Common myeloid progenitor, CD34-positive (primary cell): ENCODE measurements at regions of chr7 and their contacts with region 1.

Region 1: DNA sequence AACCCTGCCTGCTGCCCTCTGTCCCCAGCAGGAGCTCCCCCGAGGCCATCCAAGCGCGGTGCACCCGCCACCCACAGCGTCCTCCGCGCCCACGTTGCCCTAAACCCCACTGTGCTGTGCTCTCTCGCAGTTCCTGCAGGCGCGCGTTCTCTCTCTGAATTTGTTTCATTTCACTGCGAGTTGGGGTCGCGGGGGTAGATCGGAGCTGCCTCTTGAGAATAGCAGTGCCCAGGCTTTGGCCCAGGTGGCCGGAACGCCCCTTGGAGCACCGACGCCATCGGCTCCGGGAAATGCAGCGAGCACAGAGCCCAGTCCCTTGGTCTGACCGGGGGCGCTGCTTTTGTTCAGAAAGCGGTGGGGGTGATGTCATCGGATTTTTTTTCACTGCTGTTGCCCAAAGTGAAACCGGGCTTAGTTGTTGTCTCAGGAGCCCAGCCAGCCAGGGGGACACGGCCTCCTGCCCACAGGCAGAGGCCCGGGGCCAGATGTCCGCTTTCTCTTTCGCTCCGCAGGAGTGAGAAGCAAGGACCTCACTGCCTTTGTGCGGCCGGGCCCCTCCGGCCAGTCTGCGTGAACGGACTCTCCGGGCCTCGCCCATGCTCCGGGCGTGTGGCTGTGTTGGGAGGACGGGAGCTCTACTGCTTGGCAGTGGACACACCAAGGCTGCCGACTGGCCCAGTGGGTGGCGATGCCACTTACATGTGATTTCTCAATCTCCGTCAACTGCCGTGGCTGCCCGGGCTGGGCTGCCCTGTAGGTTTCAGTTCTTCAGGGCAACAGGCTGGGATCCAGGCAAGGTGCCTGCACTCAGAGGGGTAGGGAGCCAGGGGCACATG is 43.1 kb downstream of the FOXK1 start:
- DNase-seq: peak; percentile 69 to 87 (median 84)
- H3K4me3 ChIP-seq: peak overlapping the region; percentile 37 to 86 (median 62)
- H3K27ac ChIP-seq: peak overlapping the region; percentile 46 to 85
- H3K4me1 ChIP-seq: peaks cover 0 to 30% (median 24%) of the 10 kb centered on the region in 4 experiments
- H3K27me3 ChIP-seq: no peaks in the 10 kb centered on the region

Region 2: DNA sequence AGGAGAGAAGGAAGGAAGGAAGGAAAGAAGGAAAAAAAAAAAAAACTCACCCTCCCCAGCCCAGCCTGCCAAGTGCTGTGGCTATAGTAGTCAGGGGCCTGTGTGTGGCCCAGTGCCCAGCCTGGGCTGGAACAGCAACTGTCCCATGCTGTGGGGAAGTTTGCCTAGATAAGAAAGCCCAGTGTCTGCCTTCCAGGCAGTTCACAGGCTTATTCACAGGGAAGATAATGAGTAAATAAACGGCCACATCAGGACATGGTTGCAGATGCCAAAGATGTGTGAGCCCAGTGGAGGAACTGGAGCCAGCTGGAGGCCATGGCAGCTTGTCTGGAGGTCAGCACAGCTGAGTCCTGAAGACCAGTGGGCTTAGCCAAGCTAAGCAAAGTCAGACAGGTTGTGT is 175.6 kb before region 1 on chr7:
- CTCF ChIA-PET with region 1: no interaction called
- POLR2A ChIA-PET with region 1: no interaction called
- DNase-seq: peak in 1 of 3 donors; percentile 1
- H3K4me3 ChIP-seq: no peak overlapping the region
- H3K27ac ChIP-seq: no peak overlapping the region
- H3K4me1 ChIP-seq: no peaks in the 10 kb centered on the region
- H3K27me3 ChIP-seq: no peaks in the 10 kb centered on the region

Region 3: DNA sequence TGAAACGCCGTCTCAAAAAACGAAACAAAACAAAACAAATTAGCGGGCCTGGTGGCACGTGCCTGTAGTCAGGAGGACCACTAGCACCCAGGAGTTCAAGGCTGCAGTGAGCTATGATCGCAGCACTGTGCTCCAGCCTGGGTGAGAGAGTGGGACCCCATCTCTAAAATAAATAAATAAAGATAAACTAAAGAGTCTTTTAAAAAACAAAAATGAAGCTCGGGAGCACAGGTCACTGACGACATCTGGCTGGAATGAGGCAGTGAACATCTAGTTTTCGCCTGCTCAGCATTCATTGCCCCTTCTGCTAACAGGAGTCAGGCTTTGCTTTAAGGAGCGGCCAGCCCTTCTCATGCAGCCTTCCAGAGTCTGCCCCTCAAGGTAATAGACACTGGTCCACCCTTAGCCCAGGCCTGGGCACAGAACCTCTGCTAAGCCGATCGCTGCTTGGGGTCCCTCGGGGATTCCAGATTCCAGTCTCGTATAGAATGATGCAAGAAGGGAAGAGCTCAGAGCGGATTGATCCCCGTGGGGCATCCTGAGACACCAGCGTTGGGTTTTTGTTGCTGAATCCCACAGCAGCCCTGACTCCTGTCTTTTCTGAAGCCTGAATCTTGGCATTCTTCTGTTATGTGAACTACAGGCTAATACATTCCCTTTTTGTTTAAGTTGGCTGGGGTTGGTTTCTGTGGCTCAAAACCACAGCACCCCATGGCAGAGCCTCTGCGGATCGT is 57.3 kb before region 1 on chr7:
- CTCF ChIA-PET with region 1: no interaction called
- POLR2A ChIA-PET with region 1: no interaction called
- DNase-seq: no peak
- H3K4me3 ChIP-seq: no peak overlapping the region
- H3K27ac ChIP-seq: no peak overlapping the region
- H3K4me1 ChIP-seq: no peaks in the 10 kb centered on the region
- H3K27me3 ChIP-seq: no peaks in the 10 kb centered on the region

Region 4: DNA sequence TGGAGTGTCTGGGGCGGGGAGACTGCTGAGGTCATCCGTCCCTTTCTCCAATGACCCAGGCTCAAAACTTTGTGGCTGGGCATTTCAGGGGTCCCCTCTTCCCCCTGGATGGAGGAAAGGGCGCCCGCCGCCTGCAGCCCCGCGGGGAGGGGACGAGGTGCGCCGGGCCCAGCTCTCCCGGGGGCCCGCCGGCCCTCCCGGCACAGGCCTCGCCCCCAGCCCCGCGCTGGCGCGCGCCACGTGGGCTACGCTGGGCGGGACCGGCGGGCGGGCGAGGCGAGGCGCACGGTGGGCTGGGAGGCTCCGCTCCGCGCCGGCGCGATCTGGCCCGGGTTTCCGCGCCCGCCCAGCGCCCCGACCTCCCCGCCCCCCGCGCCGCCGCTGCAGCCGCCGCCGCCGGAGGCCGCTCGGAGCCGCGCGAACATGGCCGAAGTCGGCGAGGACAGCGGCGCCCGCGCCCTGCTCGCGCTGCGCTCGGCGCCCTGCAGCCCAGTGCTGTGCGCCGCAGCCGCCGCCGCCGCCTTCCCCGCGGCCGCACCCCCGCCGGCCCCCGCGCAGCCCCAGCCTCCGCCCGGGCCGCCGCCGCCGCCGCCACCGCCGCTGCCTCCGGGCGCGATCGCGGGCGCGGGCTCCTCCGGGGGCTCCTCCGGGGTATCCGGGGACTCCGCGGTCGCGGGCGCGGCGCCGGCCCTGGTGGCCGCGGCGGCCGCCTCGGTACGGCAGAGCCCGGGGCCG is 43.2 kb before region 1 on chr7 and contains the start of gene FOXK1:
- CTCF ChIA-PET with region 1: interaction called, 10 read pairs
- POLR2A ChIA-PET with region 1: interaction called, 4 read pairs
- DNase-seq: peak; percentile 64 to 82 (median 81)
- H3K4me3 ChIP-seq: peak within 1 kb of the TSS; percentile 62 to 96 (median 83)
- H3K27ac ChIP-seq: peak within 1 kb of the TSS; percentile 75 to 91
- H3K4me1 ChIP-seq: peaks cover 0 to 26% (median 24%) of the 10 kb centered on the region in 4 experiments
- H3K27me3 ChIP-seq: no peaks in the 10 kb centered on the region

Region 5: GRCh38 chr7:4744391-4745264 is 19.4 kb after region 1 on chr7:
- CTCF ChIA-PET with region 1: interaction called, 13 read pairs
- POLR2A ChIA-PET with region 1: interaction called, 4 read pairs
- DNase-seq: peak; percentile 75 to 90 (median 76)
- H3K4me3 ChIP-seq: peak overlapping the region; percentile 11 to 88 (median 60)
- H3K27ac ChIP-seq: peak overlapping the region; percentile 85 to 93
- H3K4me1 ChIP-seq: peaks cover 3 to 61% (median 45%) of the 10 kb centered on the region in 4 experiments
- H3K27me3 ChIP-seq: no peaks in the 10 kb centered on the region

Region 6: GRCh38 chr7:4791738-4792536 is 66.7 kb after region 1 on chr7:
- CTCF ChIA-PET with region 1: no interaction called
- POLR2A ChIA-PET with region 1: no interaction called
- DNase-seq: peak; percentile 75 to 88 (median 84)
- H3K4me3 ChIP-seq: peak overlapping the region in 6 of 7 experiments; percentile 30 to 72 (median 66)
- H3K27ac ChIP-seq: no peak overlapping the region
- H3K4me1 ChIP-seq: peaks cover 0 to 12% (median 5%) of the 10 kb centered on the region in 4 experiments
- H3K27me3 ChIP-seq: no peaks in the 10 kb centered on the region